Heart left ventricle (tissue), 16 donors: ENCODE measurements at regions of chr4 and their contacts with region 1.

Region 1: GRCh38 chr4:122922877-122923511 is 597 bp upstream of the NUDT6 start:
- DNase-seq: peak; percentile 83 to 89 (median 87)
- ATAC-seq: peak; percentile 98 to 99 (median 99)
- H3K4me3 ChIP-seq: peak overlapping the region; percentile 68 to 95 (median 85)
- H3K27ac ChIP-seq: peak overlapping the region; percentile 62 to 86 (median 77)
- H3K4me1 ChIP-seq: peaks cover 0 to 21% (median 12%) of the 10 kb centered on the region in 12 donors
- H3K27me3 ChIP-seq: no peaks in the 10 kb centered on the region
- CTCF ChIP-seq: peak in 1 of 12 donors; percentile 5
- POLR2A ChIP-seq: no peak

Region 2: DNA sequence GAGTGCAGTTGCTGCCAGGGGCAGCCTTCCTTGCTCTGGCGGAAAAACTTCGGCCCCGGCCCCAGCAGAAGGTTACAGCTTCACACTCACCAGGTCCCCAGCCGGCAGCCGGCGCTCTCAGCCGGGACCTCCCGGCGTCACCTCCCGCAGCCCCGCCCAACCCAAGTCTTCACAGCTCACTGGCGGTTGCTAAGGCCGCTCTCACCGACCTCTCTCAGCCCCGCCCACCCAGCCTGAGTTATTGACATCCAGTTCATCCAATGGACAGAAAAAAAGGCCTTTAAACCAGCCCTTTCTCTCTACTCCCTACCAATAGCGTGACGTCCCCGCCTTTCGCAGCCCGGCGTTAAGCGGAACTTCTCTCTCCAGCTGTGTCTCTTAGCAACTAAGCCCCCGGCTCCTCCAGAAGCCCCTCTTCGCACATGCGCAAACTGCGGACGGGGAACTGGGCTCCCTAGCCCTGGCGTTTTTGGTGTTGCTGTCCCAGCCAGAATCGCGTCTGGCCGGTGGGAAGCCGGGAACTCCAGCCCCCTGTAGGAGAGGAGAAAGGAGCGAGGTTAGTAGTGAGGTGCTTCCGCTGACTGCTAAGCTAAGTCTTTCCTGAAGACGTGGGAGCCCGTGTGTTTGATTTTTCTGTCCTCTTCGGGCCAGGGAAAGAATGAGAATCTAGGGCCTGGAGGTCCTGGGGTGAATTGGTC is 190.5 kb before region 1 on chr4 and contains the start of gene BBS12:
- intact Hi-C with region 1: loop called in 3 of 10 experiments (anchors 5 kb)
- DNase-seq: peak; percentile 98
- ATAC-seq: peak; percentile 99 to 100 (median 100)
- H3K4me3 ChIP-seq: peak within 1 kb of the TSS; percentile 49 to 89 (median 80)
- H3K27ac ChIP-seq: peak within 1 kb of the TSS; percentile 22 to 89 (median 80)
- H3K4me1 ChIP-seq: peaks cover 0 to 21% (median 11%) of the 10 kb centered on the region in 12 donors
- H3K27me3 ChIP-seq: no peaks in the 10 kb centered on the region
- CTCF ChIP-seq: peak in 7 of 12 donors; percentile 4 to 58 (median 34)
- POLR2A ChIP-seq: peak in 1 of 2 donors; percentile 41
- total RNA-seq, gene BBS12: 3.4 to 11.9 (median 6.8) TPM